Activated T-helper 1 cell treated with anti-CD3 and anti-CD28 coated beads, Interleukin-12 subunit alpha, Interleukin-12 subunit beta, Interleukin-2, Interleukin-4 antibody, amounts not matched to agents 30 ng/mL and 10 ng/mL and 1 ng/mL, durations not matched to agents 14 hours and 24 hours and 36 hours (primary cell): ENCODE measurements at regions of chr3 and their contacts with region 1.

Region 1: DNA sequence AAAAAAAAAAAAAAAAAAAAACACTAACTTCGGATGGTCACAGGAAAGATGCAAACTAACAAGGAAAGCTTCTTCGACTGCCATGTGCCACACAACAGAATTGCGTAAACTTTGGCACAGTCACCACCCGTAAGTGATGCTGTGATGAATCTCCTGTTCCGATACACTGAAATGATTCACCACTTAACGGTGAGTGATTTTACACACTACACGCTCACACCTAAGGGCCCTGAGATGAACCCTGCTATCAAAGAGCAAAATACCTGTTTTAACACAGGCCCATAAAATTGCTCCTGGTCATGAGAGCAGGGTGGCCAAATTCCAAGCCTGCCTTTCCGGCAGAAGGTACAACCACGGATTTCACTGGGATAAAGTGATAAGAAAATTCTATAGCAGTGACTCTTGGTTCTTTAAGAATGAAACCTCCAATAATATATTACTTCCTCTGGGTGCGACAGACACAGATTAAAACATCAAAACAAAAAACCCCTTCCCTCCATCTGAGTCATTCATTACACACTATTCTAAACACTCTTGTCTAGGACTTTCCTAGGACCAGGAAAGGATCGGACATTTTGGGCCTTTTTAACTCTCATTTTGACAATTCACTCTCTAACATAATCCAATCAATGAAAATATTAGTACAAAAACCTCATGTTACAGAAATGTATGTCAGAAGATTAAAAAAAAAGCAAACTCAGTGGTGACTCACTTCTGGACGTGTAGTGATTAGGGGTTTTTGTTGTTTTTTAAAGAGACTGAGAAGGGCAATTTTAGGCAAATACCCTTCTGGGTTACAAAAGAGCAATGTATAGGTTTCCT is 28.3 kb downstream of the LRIG1 start:
- DNase-seq: peak; percentile 48
- H3K4me3 Mint-ChIP-seq: peak overlapping the region; percentile 76
- H3K27ac Mint-ChIP-seq: no peak overlapping the region
- H3K4me1 Mint-ChIP-seq: peaks cover 44% of the 10 kb centered on the region
- H3K27me3 Mint-ChIP-seq: no peaks in the 10 kb centered on the region

Region 2: DNA sequence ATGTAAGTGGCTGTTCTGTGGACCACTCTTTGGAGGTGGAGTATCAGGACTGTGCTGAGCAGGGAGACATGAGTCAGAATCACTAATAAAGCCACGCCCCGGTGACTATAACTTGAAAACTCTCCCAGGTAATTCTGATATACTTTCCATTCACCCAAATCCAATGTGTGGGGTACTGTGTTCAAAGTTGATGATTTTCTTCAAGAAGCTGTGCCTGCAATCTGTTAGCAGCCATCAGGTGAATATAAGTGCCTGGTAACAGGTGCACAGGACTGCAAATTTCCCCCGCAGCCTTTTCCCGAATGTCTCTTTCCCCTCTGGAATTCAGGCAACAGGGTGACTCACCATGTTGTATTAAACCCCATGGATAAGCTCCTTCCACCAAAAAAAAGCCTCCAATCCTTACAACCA is 450.8 kb before region 1 on chr3:
- intact Hi-C with region 1: no loop called
- DNase-seq: no peak
- H3K4me3 Mint-ChIP-seq: no peak overlapping the region
- H3K27ac Mint-ChIP-seq: no peak overlapping the region
- H3K4me1 Mint-ChIP-seq: no peaks in the 10 kb centered on the region
- H3K27me3 Mint-ChIP-seq: peaks cover 1% of the 10 kb centered on the region

Region 3: DNA sequence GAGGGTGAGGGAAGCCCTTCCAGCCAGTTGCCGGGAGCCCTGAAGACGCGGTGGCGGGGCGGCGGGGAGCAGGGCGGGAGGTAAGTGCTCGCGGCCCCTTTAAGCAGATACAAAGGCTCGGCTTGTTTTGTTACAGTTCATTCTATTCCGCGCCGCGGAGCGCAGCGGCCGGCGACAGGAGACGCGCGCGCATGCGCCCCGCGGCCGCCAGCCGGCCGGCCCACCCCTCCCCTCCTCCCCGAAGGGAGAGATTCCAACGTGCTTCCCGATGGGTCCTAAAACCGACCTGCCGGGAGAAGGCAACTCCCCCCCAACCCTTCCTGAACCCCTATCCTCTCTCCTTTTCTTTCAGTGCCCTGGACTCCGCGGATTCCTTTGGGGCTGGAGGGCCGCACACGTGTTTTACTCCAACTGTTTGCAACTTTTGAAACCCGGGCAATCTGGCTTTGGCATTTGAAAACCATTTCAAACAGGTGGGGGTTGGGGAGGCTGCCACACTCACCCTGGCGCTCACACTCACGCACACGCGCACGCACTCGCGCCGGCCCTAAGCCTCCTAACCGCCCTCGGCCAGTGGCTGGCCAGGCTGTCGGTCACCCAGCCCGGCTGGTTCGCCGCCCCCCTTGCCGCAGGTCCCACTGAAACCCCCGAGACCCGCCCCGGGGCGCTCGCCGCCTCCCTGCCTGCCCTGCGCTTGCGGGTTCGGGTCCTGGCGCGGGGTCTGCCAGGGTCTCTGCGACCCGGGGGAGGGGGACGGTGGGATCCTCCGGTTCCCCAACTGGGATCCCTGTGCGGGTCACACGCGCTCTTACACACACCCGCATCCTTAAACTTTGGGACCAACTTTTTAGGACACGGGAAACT is 433.6 kb before region 1 on chr3 and contains the start of gene MAGI1:
- intact Hi-C with region 1: loop called (anchors 10 kb)
- DNase-seq: peak; percentile 12
- H3K4me3 Mint-ChIP-seq: peak within 1 kb of the TSS; percentile 94
- H3K27ac Mint-ChIP-seq: peak within 1 kb of the TSS; percentile 75
- H3K4me1 Mint-ChIP-seq: peaks cover 8% of the 10 kb centered on the region
- H3K27me3 Mint-ChIP-seq: peaks cover 62% of the 10 kb centered on the region
- total RNA-seq, gene MAGI1: 0.69 and 0.75 TPM in 2 replicates

Region 4: GRCh38 chr3:66239513-66240123 is 232.9 kb before region 1 on chr3:
- intact Hi-C with region 1: loop called (anchors 1 kb)
- DNase-seq: no peak
- H3K4me3 Mint-ChIP-seq: peak overlapping the region; percentile 15
- H3K27ac Mint-ChIP-seq: peak overlapping the region; percentile 87
- H3K4me1 Mint-ChIP-seq: peaks cover 31% of the 10 kb centered on the region
- H3K27me3 Mint-ChIP-seq: peaks cover 1% of the 10 kb centered on the region

Region 5: DNA sequence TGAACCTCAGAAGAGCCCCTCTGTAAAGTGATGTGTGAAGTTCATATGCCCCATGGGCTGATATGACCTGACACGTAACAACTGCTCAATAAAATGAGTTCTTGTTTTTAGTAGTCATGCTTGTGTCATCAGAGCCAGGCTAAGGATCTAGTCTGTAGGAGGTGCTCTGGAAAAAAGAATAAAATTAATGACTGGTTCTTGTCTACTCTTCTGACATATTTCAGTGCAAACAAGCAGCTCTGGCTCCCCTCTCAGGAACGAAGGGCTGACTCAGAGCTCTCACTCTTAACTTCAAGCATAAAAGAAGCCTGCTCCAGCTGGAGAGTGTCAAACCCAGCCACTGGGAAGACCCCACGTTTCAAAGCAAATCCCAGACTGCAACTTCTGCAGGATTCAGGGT is 48.7 kb before region 1 on chr3:
- intact Hi-C with region 1: loop called (anchors 5 kb)
- DNase-seq: no peak
- H3K4me3 Mint-ChIP-seq: no peak overlapping the region
- H3K27ac Mint-ChIP-seq: peak overlapping the region; percentile 5
- H3K4me1 Mint-ChIP-seq: peaks cover 55% of the 10 kb centered on the region
- H3K27me3 Mint-ChIP-seq: no peaks in the 10 kb centered on the region

Region 6: DNA sequence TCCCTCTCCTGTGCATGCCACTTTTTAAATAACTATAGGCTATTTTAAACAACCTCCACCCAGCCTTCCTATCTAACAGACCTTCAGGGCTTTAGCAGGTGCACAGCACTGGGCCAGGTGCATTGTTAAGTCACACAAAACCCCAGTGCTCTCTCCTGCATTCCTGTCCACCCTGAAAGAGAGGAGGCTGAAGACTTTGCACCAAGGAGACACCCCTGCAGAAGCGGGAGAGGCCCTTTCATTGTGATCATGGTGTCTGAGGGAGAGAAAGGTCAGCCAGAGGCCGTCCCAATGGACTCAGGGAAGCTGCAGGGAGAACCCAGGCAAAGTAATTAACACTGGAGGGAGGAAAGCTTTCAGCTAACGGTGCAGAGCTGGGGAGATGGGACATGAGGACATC is 23.1 kb after region 1 on chr3:
- intact Hi-C with region 1: loop called (anchors 1 kb)
- DNase-seq: no peak
- H3K4me3 Mint-ChIP-seq: peak overlapping the region; percentile 58
- H3K27ac Mint-ChIP-seq: peak overlapping the region; percentile 64
- H3K4me1 Mint-ChIP-seq: peaks cover 95% of the 10 kb centered on the region
- H3K27me3 Mint-ChIP-seq: no peaks in the 10 kb centered on the region